ENCODE measurements at regions of chr13 and their contacts with region 1.

Region 1: GRCh38 chr13:73677048-73677601 is 457.1 kb downstream of the KLF12 start:
- DNase-seq: peak; percentile 95
- H3K4me3 ChIP-seq: no peak overlapping the region
- H3K27ac ChIP-seq: peak overlapping the region; percentile 98
- H3K4me1 ChIP-seq: peaks cover 18% of the 10 kb centered on the region
- H3K27me3 ChIP-seq: no peaks in the 10 kb centered on the region
- CTCF ChIP-seq: no peak

Region 2: DNA sequence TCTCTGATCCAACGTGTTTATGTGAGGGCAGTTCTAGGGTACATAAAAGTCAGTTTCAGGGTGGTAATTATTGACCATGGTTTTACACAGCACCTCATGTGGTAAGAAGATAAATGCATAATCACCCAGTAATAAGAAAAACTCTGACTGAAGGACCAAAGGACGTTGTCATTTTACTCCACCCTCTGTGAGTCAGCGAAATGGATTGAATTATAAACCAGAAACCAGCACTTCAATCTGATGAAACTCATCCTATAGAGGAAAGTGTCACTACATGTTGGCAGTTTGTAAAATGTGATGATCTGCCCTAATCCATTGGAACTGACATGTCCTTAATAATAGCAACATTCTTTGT is 211.5 kb before region 1 on chr13:
- CTCF ChIA-PET with region 1: no interaction called
- dilution Hi-C with region 1: no loop called
- in situ Hi-C with region 1: no loop called
- intact Hi-C with region 1: loop called (anchors 2 kb)
- DNase-seq: peak; percentile 96
- H3K4me3 ChIP-seq: no peak overlapping the region
- H3K27ac ChIP-seq: peak overlapping the region; percentile 94
- H3K4me1 ChIP-seq: peaks cover 31% of the 10 kb centered on the region
- H3K27me3 ChIP-seq: no peaks in the 10 kb centered on the region
- CTCF ChIP-seq: peak; percentile 11 to 34

Region 3: GRCh38 chr13:73598021-73598712 is 79.0 kb before region 1 on chr13:
- CTCF ChIA-PET with region 1: no interaction called
- dilution Hi-C with region 1: no loop called
- in situ Hi-C with region 1: no loop called
- intact Hi-C with region 1: loop called (anchors 2 kb)
- DNase-seq: peak; percentile 91
- H3K4me3 ChIP-seq: no peak overlapping the region
- H3K27ac ChIP-seq: peak overlapping the region; percentile 69
- H3K4me1 ChIP-seq: peaks cover 16% of the 10 kb centered on the region
- H3K27me3 ChIP-seq: no peaks in the 10 kb centered on the region
- CTCF ChIP-seq: no peak